ENCODE measurements at regions of chr2 and their contacts with region 1.

Region 1: DNA sequence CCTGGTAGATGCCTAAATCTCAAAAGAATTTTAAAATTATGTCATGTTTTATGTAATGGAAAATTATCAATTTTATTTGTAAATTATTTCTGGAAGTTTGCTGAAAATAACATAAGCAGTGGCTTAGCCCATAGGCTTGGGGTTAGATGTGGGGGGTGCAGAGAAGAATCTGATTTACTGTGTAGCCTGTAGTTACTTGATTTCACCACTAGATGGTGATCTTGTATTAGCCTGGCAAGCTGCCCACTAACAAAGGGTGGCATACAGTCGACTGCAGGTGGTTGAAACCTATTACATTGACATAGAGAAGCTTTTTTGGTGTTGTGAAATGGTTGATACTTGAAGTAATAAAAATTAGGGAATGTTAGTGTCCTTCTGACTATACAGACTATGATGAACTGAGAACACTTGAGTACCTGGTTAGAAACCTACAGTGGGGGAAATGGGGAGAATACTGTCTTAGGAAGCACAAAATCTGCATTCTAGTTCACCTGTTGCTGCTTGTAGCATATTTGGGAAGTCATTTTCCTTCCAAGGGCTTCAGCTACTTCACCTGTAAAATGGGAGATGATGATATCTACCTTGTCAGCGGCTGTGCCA is 191.0 kb upstream of the LHCGR start:
- DNase-seq: peak; percentile 30
- H3K4me3 ChIP-seq: no peak overlapping the region
- H3K27ac ChIP-seq: no peak overlapping the region
- H3K4me1 ChIP-seq: no peaks in the 10 kb centered on the region
- H3K27me3 ChIP-seq: no peaks in the 10 kb centered on the region
- CTCF ChIP-seq: peak; percentile 78 to 80

Region 2: GRCh38 chr2:48131539-48132270 is 814.8 kb before region 1 on chr2:
- CTCF ChIA-PET with region 1: no interaction called
- dilution Hi-C with region 1: no loop called
- in situ Hi-C with region 1: no loop called
- intact Hi-C with region 1: no loop called
- DNase-seq: no peak
- H3K4me3 ChIP-seq: no peak overlapping the region
- H3K27ac ChIP-seq: no peak overlapping the region
- H3K4me1 ChIP-seq: no peaks in the 10 kb centered on the region
- H3K27me3 ChIP-seq: no peaks in the 10 kb centered on the region
- CTCF ChIP-seq: no peak

Region 3: DNA sequence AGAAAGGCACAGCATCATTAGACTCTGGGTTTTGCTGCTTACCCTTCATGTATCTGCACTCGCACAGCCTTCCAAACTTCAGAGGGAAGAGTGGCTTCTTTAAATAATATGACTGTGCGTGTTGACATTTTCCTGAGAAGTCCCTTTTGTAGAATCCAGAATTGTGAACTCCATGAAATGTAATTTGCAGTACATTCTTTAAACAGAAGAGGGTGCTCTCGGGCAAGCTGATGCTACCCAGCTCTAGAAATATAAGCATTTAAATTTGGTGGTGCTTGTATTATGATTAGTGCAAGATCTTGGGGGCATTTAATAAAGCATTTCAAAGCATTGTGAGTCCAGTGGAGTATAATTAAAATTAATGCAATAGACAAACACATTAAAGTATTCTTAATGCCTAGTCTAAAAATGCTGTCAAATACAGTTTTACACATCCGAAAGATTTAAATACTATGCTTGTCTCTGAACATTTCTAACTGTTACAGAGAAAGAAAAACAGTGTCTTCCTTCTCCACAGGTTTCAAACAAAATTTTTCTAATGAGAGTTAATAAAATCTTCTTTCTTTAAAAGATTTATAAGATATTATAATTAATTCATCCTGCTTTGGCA is 346.2 kb before region 1 on chr2:
- CTCF ChIA-PET with region 1: no interaction called
- dilution Hi-C with region 1: no loop called
- in situ Hi-C with region 1: no loop called
- intact Hi-C with region 1: loop called (anchors 1 kb)
- DNase-seq: peak; percentile 32
- H3K4me3 ChIP-seq: no peak overlapping the region
- H3K27ac ChIP-seq: no peak overlapping the region
- H3K4me1 ChIP-seq: no peaks in the 10 kb centered on the region
- H3K27me3 ChIP-seq: no peaks in the 10 kb centered on the region
- CTCF ChIP-seq: peak; percentile 69 to 78

Region 4: DNA sequence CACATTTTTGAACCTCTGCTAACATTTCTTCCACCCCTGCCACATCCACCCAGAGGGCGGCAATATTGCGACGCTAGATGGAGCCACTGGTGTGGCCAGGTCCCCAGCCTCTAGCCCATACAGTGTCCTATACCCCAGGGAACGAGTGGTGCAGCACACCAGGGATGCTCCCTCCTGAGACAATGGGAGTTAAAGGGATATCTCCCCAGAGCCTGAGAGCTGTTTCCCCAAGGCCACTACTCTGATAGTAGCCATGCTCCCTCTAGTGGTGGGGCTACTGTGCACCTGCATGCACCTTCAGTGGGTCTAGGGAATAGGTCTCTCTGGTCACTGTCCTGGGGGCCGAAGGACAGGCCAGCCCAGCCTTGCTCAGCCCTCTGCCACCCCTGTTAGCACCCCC is 544.2 kb after region 1 on chr2:
- CTCF ChIA-PET with region 1: no interaction called
- dilution Hi-C with region 1: no loop called
- in situ Hi-C with region 1: no loop called
- intact Hi-C with region 1: loop called (anchors 1 kb)
- DNase-seq: peak; percentile 35
- H3K4me3 ChIP-seq: no peak overlapping the region
- H3K27ac ChIP-seq: no peak overlapping the region
- H3K4me1 ChIP-seq: no peaks in the 10 kb centered on the region
- H3K27me3 ChIP-seq: no peaks in the 10 kb centered on the region
- CTCF ChIP-seq: peak; percentile 65 to 84